Transverse colon (tissue), 4 donors: ENCODE measurements at regions of chr14 and their contacts with region 1.

Region 1: GRCh38 chr14:65403231-65403630 is 9.3 kb upstream of the FUT8 start:
- DNase-seq: no peak
- H3K4me3 ChIP-seq: no peak overlapping the region
- H3K27ac ChIP-seq: no peak overlapping the region
- H3K4me1 ChIP-seq: peaks cover 0 to 7% (median 0%) of the 10 kb centered on the region in 4 donors
- H3K27me3 ChIP-seq: no peaks in the 10 kb centered on the region
- CTCF ChIP-seq: no peak
- EP300 ChIP-seq: no peak
- POLR2A ChIP-seq: no peak

Region 2: GRCh38 chr14:65222440-65222858 is 180.8 kb before region 1 on chr14:
- in situ Hi-C with region 1: loop called in 2 of 4 experiments (anchors 10 to 25 kb)
- intact Hi-C with region 1: no loop called
- DNase-seq: peak; percentile 68
- H3K4me3 ChIP-seq: no peak overlapping the region
- H3K27ac ChIP-seq: no peak overlapping the region
- H3K4me1 ChIP-seq: peaks cover 5 to 33% (median 10%) of the 10 kb centered on the region in 4 donors
- H3K27me3 ChIP-seq: no peaks in the 10 kb centered on the region
- CTCF ChIP-seq: peak; percentile 72 to 82 (median 78)
- EP300 ChIP-seq: no peak
- POLR2A ChIP-seq: no peak

Region 3: GRCh38 chr14:65506809-65507208 is 103.6 kb after region 1 on chr14:
- in situ Hi-C with region 1: no loop called
- intact Hi-C with region 1: no loop called
- DNase-seq: no peak
- H3K4me3 ChIP-seq: no peak overlapping the region
- H3K27ac ChIP-seq: no peak overlapping the region
- H3K4me1 ChIP-seq: no peaks in the 10 kb centered on the region
- H3K27me3 ChIP-seq: no peaks in the 10 kb centered on the region
- CTCF ChIP-seq: no peak
- EP300 ChIP-seq: no peak
- POLR2A ChIP-seq: no peak

Region 4: GRCh38 chr14:65537762-65538161 is 134.5 kb after region 1 on chr14:
- in situ Hi-C with region 1: no loop called
- intact Hi-C with region 1: no loop called
- DNase-seq: no peak
- H3K4me3 ChIP-seq: no peak overlapping the region
- H3K27ac ChIP-seq: no peak overlapping the region
- H3K4me1 ChIP-seq: no peaks in the 10 kb centered on the region
- H3K27me3 ChIP-seq: no peaks in the 10 kb centered on the region
- CTCF ChIP-seq: no peak
- EP300 ChIP-seq: no peak
- POLR2A ChIP-seq: no peak

Region 5: GRCh38 chr14:65824285-65824977 is 421.2 kb after region 1 on chr14:
- in situ Hi-C with region 1: loop called in 1 of 4 experiments (anchors 10 kb)
- intact Hi-C with region 1: no loop called
- DNase-seq: peak; percentile 61
- H3K4me3 ChIP-seq: no peak overlapping the region
- H3K27ac ChIP-seq: no peak overlapping the region
- H3K4me1 ChIP-seq: peaks cover 0 to 4% (median 0%) of the 10 kb centered on the region in 4 donors
- H3K27me3 ChIP-seq: no peaks in the 10 kb centered on the region
- CTCF ChIP-seq: peak; percentile 91 to 95 (median 92)
- EP300 ChIP-seq: no peak
- POLR2A ChIP-seq: no peak